Heart right ventricle (tissue), 16 donors: ENCODE measurements at regions of chr2 and their contacts with region 1.

Region 1: GRCh38 chr2:190804182-190804795 is 76.3 kb upstream of the GLS start:
- DNase-seq: no peak
- ATAC-seq: peak in 1 of 8 donors; percentile 38
- H3K4me3 ChIP-seq: no peak overlapping the region
- H3K27ac ChIP-seq: no peak overlapping the region
- H3K4me1 ChIP-seq: peaks cover 0 to 7% (median 0%) of the 10 kb centered on the region in 9 donors
- H3K27me3 ChIP-seq: no peaks in the 10 kb centered on the region
- CTCF ChIP-seq: peak; percentile 35 to 82 (median 69)

Region 2: GRCh38 chr2:190334479-190335224 is 469.6 kb before region 1 on chr2:
- intact Hi-C with region 1: loop called in 1 of 10 experiments (anchors 10 kb)
- DNase-seq: peak in 1 of 2 donors; percentile 42
- ATAC-seq: peak; percentile 78 to 96 (median 88)
- H3K4me3 ChIP-seq: no peak overlapping the region
- H3K27ac ChIP-seq: peak overlapping the region in 9 of 10 donors; percentile 10 to 72 (median 50)
- H3K4me1 ChIP-seq: peaks cover 0 to 23% (median 7%) of the 10 kb centered on the region in 9 donors
- H3K27me3 ChIP-seq: no peaks in the 10 kb centered on the region
- CTCF ChIP-seq: no peak

Region 3: GRCh38 chr2:190382851-190383250 is 421.4 kb before region 1 on chr2:
- intact Hi-C with region 1: loop called in 4 of 10 experiments (anchors 5 to 10 kb)
- DNase-seq: peak in 1 of 2 donors; percentile 26
- ATAC-seq: peak in 5 of 8 donors; percentile 50 to 76 (median 67)
- H3K4me3 ChIP-seq: no peak overlapping the region
- H3K27ac ChIP-seq: no peak overlapping the region
- H3K4me1 ChIP-seq: peaks cover 0 to 11% (median 0%) of the 10 kb centered on the region in 9 donors
- H3K27me3 ChIP-seq: no peaks in the 10 kb centered on the region
- CTCF ChIP-seq: peak; percentile 34 to 73 (median 58)

Region 4: GRCh38 chr2:190540048-190540447 is 264.2 kb before region 1 on chr2:
- intact Hi-C with region 1: loop called in 3 of 10 experiments (anchors 10 kb)
- DNase-seq: no peak
- ATAC-seq: no peak
- H3K4me3 ChIP-seq: no peak overlapping the region
- H3K27ac ChIP-seq: no peak overlapping the region
- H3K4me1 ChIP-seq: peaks cover 0 to 18% (median 0%) of the 10 kb centered on the region in 9 donors
- H3K27me3 ChIP-seq: no peaks in the 10 kb centered on the region
- CTCF ChIP-seq: no peak

Region 5: GRCh38 chr2:190641469-190641868 is 162.8 kb before region 1 on chr2:
- intact Hi-C with region 1: loop called in 1 of 10 experiments (anchors 5 kb)
- DNase-seq: no peak
- ATAC-seq: peak in 2 of 8 donors; percentile 14 to 31
- H3K4me3 ChIP-seq: peak overlapping the region in 1 of 10 donors; percentile 6
- H3K27ac ChIP-seq: peak overlapping the region in 8 of 10 donors; percentile 8 to 64 (median 32)
- H3K4me1 ChIP-seq: peaks cover 7 to 66% (median 14%) of the 10 kb centered on the region in 9 donors
- H3K27me3 ChIP-seq: no peaks in the 10 kb centered on the region
- CTCF ChIP-seq: no peak

Region 6: DNA sequence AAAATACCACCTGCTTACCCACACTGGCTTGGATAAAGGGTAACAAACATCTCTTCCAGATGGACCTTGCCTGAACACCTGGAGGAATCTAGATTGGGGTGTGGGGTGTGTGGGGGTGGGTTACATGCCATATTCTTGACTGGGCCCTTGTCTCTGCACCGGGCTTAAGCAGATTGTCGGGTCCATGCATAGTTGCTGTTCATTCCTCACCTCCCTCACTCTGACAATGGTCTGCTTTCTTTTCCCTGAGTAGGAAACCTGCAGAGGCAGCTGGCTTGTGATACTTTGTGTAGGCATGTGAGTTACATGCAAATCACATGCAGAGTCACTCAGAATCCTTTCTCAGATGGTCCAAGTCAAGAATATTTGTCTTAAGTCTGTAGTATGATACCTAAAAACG is 36.5 kb before region 1 on chr2:
- intact Hi-C with region 1: no loop called
- DNase-seq: no peak
- ATAC-seq: no peak
- H3K4me3 ChIP-seq: no peak overlapping the region
- H3K27ac ChIP-seq: no peak overlapping the region
- H3K4me1 ChIP-seq: no peaks in the 10 kb centered on the region
- H3K27me3 ChIP-seq: no peaks in the 10 kb centered on the region
- CTCF ChIP-seq: no peak